Mammary epithelial cell (primary cell): ENCODE measurements at regions of chr2 and their contacts with region 1.

Region 1: GRCh38 chr2:47767880-47768609 is 14.9 kb upstream of the MSH6 start:
- DNase-seq: peak; percentile 8
- H3K4me3 ChIP-seq: peak overlapping the region in 1 of 3 experiments; percentile 18
- H3K27ac ChIP-seq: no peak overlapping the region
- H3K4me1 ChIP-seq: peaks cover 5% of the 10 kb centered on the region
- H3K27me3 ChIP-seq: no peaks in the 10 kb centered on the region
- CTCF ChIP-seq: peak; percentile 84 to 99

Region 2: DNA sequence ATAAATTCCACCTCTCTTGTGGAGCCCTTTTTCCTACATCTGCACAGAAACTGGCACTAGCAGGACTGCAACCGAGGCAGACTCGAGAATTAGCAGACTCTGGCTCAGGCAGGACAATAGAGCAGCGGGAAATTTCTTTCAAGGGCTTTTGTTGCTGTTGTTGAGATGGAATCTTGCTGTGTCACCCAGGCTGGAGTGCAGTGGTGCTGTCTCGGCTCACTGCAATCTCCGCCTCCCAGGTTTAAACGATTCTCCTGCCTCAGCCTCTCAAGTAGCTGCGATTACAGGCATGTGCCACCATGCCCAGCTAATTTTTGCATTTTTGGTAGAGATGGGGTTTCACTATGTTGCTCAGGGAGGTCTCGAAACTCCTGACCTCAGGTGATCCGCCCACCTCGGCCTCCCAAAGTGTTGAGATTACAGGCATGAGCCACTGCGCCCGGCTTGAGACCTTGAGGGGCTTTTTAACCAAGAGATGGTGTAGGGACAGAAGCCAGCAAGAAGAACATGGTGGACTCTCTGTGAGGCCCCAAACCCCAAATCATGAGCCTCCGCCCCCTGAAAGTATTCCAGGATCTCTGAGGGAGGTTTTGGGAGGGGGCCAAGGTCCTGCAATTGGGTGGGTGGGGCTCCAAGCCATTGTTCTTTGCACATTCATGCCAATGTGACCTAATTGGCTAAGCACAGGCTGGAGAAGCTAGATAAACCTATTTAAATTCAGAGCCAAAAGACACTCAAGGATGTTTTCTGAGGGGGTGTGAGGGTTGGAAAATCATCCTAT is 433.5 kb before region 1 on chr2:
- CTCF ChIA-PET with region 1: no interaction called
- dilution Hi-C with region 1: no loop called
- in situ Hi-C with region 1: loop called in 1 of 2 experiments (anchors 10 kb)
- intact Hi-C with region 1: loop called (anchors 1 kb)
- DNase-seq: no peak
- H3K4me3 ChIP-seq: no peak overlapping the region
- H3K27ac ChIP-seq: no peak overlapping the region
- H3K4me1 ChIP-seq: peaks cover 4% of the 10 kb centered on the region
- H3K27me3 ChIP-seq: no peaks in the 10 kb centered on the region
- CTCF ChIP-seq: no peak

Region 3: DNA sequence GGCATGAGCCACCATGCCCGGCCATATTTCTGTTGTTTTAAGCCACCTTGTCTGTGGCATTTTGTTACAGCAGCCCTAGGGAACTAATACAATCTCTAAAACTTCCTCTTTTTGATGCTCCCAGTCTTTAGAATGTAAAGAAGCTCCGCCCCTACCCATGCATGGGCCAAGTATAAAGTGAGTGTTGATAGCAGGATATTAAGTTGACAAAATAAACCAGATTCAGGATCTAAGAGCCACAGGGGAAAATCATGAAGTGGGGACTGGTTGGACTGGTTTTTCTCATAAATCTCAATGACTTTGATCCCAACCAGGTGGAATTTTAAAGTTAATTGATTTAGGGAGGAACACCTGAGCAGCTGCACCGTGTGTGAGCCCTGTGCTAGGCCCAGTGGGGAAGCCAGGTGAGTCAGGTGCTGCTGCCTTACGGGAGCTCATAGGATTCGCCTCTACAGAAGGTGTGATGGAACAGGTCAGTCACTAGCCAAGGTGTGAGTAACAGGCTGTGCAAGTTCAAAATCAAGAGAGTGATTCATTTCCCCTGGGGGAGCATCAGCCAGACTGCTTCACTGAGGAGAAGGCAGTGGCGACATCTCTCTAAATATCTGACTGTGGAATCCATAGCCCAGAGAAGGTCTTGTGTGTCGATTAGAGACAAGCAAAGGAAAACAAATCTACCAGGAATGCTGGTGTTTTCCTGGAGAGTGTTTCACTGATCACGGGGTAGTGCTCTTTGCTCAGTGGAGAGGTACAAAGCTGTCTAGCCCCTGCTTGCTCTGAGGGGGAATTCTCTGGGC is 428.1 kb before region 1 on chr2:
- CTCF ChIA-PET with region 1: no interaction called
- dilution Hi-C with region 1: no loop called
- in situ Hi-C with region 1: loop called in 1 of 2 experiments (anchors 10 kb)
- intact Hi-C with region 1: loop called (anchors 1 kb)
- DNase-seq: peak; percentile 96
- H3K4me3 ChIP-seq: no peak overlapping the region
- H3K27ac ChIP-seq: no peak overlapping the region
- H3K4me1 ChIP-seq: peaks cover 16% of the 10 kb centered on the region
- H3K27me3 ChIP-seq: no peaks in the 10 kb centered on the region
- CTCF ChIP-seq: no peak

Region 4: DNA sequence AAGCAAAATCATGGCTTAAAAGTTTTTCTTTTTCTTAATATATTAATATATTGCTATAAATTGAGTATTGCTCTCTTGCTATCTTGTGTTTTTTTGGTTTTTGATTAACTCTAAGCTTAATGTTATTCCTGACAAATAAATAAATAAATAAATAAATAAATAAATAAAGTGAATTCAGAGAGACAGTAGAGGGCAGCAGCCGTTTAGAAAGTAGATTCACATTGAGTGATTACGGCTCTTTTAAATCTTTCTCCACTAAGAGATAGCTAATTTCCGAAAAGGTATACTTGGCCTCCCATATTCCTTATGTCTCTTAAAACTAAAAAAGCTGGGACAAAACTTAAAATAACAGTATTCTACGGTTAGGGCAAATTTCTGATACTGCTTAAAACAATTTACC is 330.8 kb before region 1 on chr2:
- CTCF ChIA-PET with region 1: interaction called, 5 read pairs
- dilution Hi-C with region 1: no loop called
- in situ Hi-C with region 1: loop called (anchors 5 kb)
- intact Hi-C with region 1: loop called (anchors 1 kb)
- DNase-seq: no peak
- H3K4me3 ChIP-seq: no peak overlapping the region
- H3K27ac ChIP-seq: no peak overlapping the region
- H3K4me1 ChIP-seq: no peaks in the 10 kb centered on the region
- H3K27me3 ChIP-seq: no peaks in the 10 kb centered on the region
- CTCF ChIP-seq: peak; percentile 19 to 52

Region 5: GRCh38 chr2:47520825-47521665 is 247.0 kb before region 1 on chr2:
- CTCF ChIA-PET with region 1: no interaction called
- dilution Hi-C with region 1: no loop called
- in situ Hi-C with region 1: no loop called
- intact Hi-C with region 1: loop called (anchors 5 kb)
- DNase-seq: peak; percentile 64
- H3K4me3 ChIP-seq: peak overlapping the region; percentile 7 to 53 (median 41)
- H3K27ac ChIP-seq: no peak overlapping the region
- H3K4me1 ChIP-seq: peaks cover 15% of the 10 kb centered on the region
- H3K27me3 ChIP-seq: peaks cover 5% of the 10 kb centered on the region
- CTCF ChIP-seq: peak in 1 of 2 donors; percentile 30